ENCODE measurements at regions of chr12 and their contacts with region 1.

Region 1: GRCh38 chr12:12425616-12426015 is 68.7 kb downstream of the BORCS5 start:
- DNase-seq: no peak
- H3K4me3 ChIP-seq: no peak overlapping the region
- H3K27ac ChIP-seq: no peak overlapping the region
- H3K4me1 ChIP-seq: peaks cover 22% of the 10 kb centered on the region
- H3K27me3 ChIP-seq: no peaks in the 10 kb centered on the region
- CTCF ChIP-seq: no peak

Region 2: GRCh38 chr12:12381982-12382381 is 43.6 kb before region 1 on chr12:
- CTCF ChIA-PET with region 1: no interaction called
- dilution Hi-C with region 1: no loop called
- in situ Hi-C with region 1: no loop called
- intact Hi-C with region 1: no loop called
- DNase-seq: no peak
- H3K4me3 ChIP-seq: no peak overlapping the region
- H3K27ac ChIP-seq: no peak overlapping the region
- H3K4me1 ChIP-seq: peaks cover under 1% of the 10 kb centered on the region
- H3K27me3 ChIP-seq: no peaks in the 10 kb centered on the region
- CTCF ChIP-seq: no peak

Region 3: DNA sequence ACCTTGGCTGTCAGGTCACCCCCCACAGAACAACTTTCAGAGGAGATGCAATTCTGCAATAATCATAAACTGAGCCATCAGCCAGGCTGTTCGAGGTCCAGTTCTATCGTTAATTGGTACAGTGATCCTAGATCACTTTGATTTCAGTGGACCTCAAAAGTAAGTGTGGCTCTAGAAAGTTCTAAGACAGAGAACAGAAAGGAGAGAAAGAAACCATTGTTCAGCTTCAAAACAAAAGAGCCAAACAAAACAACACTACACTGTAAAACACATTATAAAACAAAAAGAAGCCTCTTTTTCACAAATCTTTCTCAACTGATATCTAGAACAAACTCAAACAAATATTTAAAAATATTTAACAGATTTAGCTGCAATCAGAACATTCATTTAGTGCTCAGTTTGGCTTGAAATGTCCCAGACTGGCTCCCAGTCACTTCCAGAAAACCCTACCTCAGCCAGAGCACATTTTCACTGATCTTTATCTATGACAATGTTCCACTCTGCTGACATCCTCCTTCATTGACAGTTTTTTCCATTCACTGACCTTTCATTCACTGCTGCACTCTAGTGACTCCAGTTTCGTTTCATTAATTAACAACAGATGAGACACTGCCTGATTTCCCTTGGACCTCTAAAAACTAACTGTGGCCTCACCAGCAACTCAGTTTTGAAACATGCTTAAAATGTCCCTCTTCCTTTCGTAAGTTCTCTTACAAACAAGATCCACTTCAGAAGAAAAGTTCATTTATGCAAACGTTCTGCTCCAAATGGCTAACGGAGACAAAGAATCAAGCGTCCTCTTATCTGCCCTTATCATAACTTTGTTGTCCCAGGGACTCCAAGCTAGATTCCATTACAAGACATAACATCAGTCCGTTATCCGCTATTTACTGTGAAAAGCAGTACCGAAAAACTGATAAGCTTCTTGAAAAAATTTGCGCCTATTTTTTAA is 80.2 kb after region 1 on chr12:
- CTCF ChIA-PET with region 1: no interaction called
- dilution Hi-C with region 1: no loop called
- in situ Hi-C with region 1: no loop called
- intact Hi-C with region 1: no loop called
- DNase-seq: no peak
- H3K4me3 ChIP-seq: no peak overlapping the region
- H3K27ac ChIP-seq: no peak overlapping the region
- H3K4me1 ChIP-seq: peaks cover 12% of the 10 kb centered on the region
- H3K27me3 ChIP-seq: no peaks in the 10 kb centered on the region
- CTCF ChIP-seq: no peak

Region 4: DNA sequence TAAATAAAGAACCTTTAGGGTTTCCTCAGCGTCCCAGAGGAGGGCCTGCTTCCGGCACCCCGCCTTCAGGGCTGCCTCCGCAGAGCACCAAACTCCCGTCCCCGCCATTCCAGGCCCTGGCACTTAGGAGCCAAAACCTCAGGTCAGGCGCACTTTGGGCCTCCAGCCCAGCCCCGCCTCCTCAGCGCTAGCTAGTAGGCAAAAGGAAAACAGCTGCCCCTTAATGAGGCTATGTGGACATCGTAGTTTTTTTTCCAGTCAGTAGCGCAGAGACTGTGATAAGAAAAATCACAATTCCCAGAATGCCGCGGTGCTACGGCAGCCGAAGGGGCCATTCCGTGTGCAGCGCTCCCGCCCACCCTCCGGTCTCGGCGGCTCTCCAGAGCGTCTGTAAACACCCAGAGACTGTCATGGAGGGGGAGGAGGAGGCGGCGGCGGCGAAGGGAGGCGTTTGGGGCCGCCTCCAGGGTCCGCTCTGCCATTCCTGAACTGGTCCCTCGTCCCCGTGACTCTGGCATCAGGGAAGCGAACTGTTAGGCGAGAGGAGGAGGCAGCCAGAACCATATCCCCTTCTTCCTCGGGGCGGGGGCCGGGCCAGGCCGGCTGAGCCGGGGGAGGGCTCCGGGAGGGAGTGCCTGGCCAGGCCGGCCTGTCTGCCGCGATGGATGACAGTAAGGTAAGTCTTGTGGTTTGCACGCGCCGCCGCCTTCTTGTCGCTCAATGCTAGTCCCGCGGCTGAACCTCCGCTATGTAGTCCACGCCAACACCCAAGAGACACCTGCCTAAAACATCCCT is 186.1 kb after region 1 on chr12 and contains the start of gene CREBL2:
- CTCF ChIA-PET with region 1: no interaction called
- dilution Hi-C with region 1: no loop called
- in situ Hi-C with region 1: no loop called
- intact Hi-C with region 1: loop called (anchors 5 kb)
- DNase-seq: peak; percentile 92
- H3K4me3 ChIP-seq: peak within 1 kb of the TSS; percentile 65 to 75 (median 75)
- H3K27ac ChIP-seq: peak within 1 kb of the TSS; percentile 76
- H3K4me1 ChIP-seq: peaks cover 23% of the 10 kb centered on the region
- H3K27me3 ChIP-seq: no peaks in the 10 kb centered on the region
- CTCF ChIP-seq: no peak
- total RNA-seq, gene CREBL2: 18.1 to 40.2 TPM

Measured in mammary epithelial cell (primary cell).